ENCODE measurements at regions of chr9 and their contacts with region 1.

Region 1: GRCh38 chr9:111715471-111715870 is 54.1 kb downstream of the GNG10 start:
- DNase-seq: no peak
- ATAC-seq: no peak
- H3K4me3 ChIP-seq: no peak overlapping the region
- H3K27ac ChIP-seq: no peak overlapping the region
- H3K4me1 ChIP-seq: no peaks in the 10 kb centered on the region
- H3K27me3 ChIP-seq: no peaks in the 10 kb centered on the region
- CTCF ChIP-seq: no peak
- POLR2A ChIP-seq: no peak
- RAD21 ChIP-seq: no peak

Region 2: DNA sequence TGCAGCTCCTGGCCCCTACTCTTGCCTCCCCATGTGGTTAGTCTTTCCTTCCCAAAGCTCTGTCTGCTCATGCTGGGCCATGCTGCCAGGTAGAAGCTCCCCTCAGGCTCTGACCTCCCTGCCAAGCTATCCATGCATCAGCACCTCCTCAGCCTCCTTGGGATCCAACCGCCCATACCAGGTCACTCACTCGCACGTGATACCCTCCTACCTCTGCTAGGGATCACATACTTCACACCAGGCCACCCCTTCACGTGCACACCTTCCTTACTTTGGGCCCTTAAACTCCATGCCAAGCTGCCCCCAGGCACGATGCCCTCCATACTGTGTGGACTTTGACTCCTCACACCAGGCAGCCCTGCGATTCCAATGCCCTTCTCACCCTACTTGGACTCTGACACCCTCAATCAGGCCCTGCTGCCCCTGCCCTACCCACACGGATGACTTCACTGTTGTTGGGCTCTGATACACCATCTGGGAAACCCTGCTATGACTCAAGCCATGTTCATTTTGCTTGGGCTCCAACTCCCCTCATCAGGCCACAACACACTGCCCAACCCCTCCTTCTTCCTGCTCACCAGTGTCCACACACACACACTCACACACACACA is 156.4 kb before region 1 on chr9:
- CTCF ChIA-PET with region 1: no interaction called
- POLR2A ChIA-PET with region 1: no interaction called
- RAD21 ChIA-PET with region 1: no interaction called
- intact Hi-C with region 1: no loop called
- DNase-seq: no peak
- ATAC-seq: peak; percentile 22; the same call in 1 of the 2 replicates
- H3K4me3 ChIP-seq: no peak overlapping the region
- H3K27ac ChIP-seq: no peak overlapping the region
- H3K4me1 ChIP-seq: no peaks in the 10 kb centered on the region
- H3K27me3 ChIP-seq: no peaks in the 10 kb centered on the region
- CTCF ChIP-seq: no peak
- POLR2A ChIP-seq: no peak
- RAD21 ChIP-seq: no peak

Region 3: DNA sequence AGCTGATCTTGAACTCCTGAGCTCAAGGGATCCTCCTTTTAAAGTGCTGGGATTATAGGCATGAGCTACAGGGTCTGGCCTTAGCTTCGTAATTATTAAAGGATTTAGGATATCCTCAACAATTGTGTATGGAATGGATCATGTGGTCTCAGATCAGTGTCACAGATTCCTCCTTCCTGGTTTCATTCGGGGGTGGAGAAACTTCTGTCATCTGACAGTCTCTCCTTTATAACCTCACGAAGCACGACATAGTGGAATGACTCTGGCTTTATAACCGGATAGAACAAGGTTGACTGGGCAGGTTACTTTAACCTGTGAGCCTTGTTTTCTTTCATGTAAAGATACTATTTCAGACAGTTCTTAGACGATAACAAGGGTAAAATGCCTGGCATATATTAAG is 58.4 kb before region 1 on chr9:
- CTCF ChIA-PET with region 1: no interaction called
- POLR2A ChIA-PET with region 1: no interaction called
- RAD21 ChIA-PET with region 1: no interaction called
- intact Hi-C with region 1: loop called (anchors 10 kb)
- DNase-seq: no peak
- ATAC-seq: no peak
- H3K4me3 ChIP-seq: no peak overlapping the region
- H3K27ac ChIP-seq: no peak overlapping the region
- H3K4me1 ChIP-seq: peaks cover 0 to 1% of the 10 kb centered on the region in 2 experiments; a peak in 1 of 4 replicates
- H3K27me3 ChIP-seq: no peaks in the 10 kb centered on the region
- CTCF ChIP-seq: no peak
- POLR2A ChIP-seq: no peak
- RAD21 ChIP-seq: no peak

Region 4: GRCh38 chr9:111886983-111887711 is 171.7 kb after region 1 on chr9:
- CTCF ChIA-PET with region 1: no interaction called
- POLR2A ChIA-PET with region 1: no interaction called
- RAD21 ChIA-PET with region 1: no interaction called
- intact Hi-C with region 1: no loop called
- DNase-seq: no peak
- ATAC-seq: no peak
- H3K4me3 ChIP-seq: no peak overlapping the region
- H3K27ac ChIP-seq: no peak overlapping the region
- H3K4me1 ChIP-seq: peaks cover 9 to 13% of the 10 kb centered on the region in 2 experiments; a peak in 3 of 4 replicates
- H3K27me3 ChIP-seq: no peaks in the 10 kb centered on the region
- CTCF ChIP-seq: no peak
- POLR2A ChIP-seq: no peak
- RAD21 ChIP-seq: no peak

Measured in HCT116 (cell line).